ENCODE measurements at regions of chr12 and their contacts with region 1.

Region 1: GRCh38 chr12:112473056-112473455 is 54.3 kb downstream of the PTPN11 start:
- DNase-seq: no peak
- H3K4me3 ChIP-seq: no peak overlapping the region
- H3K27ac ChIP-seq: no peak overlapping the region
- H3K4me1 ChIP-seq: peaks cover 0 to 11% of the 10 kb centered on the region in 2 donors
- H3K27me3 ChIP-seq: no peaks in the 10 kb centered on the region
- CTCF ChIP-seq: no peak
- POLR2A ChIP-seq: no peak

Region 2: GRCh38 chr12:112514926-112515642 is 42.0 kb after region 1 on chr12:
- intact Hi-C with region 1: loop called in 1 of 2 experiments (anchors 2 kb)
- DNase-seq: no peak
- H3K4me3 ChIP-seq: no peak overlapping the region
- H3K27ac ChIP-seq: no peak overlapping the region
- H3K4me1 ChIP-seq: no peaks in the 10 kb centered on the region
- H3K27me3 ChIP-seq: no peaks in the 10 kb centered on the region
- CTCF ChIP-seq: no peak
- POLR2A ChIP-seq: no peak